Natural killer cell (primary cell): ENCODE measurements at regions of chr1 and their contacts with region 1.

Region 1: GRCh38 chr1:89271341-89272015 is 1.2 kb downstream of the GBP5 start:
- DNase-seq: no peak
- ATAC-seq: peak in 2 of 3 donors; percentile 36 to 41
- H3K4me3 ChIP-seq: peak overlapping the region; percentile 56
- H3K4me3 Mint-ChIP-seq: peak overlapping the region; percentile 96
- H3K27ac ChIP-seq: peak overlapping the region; percentile 59
- H3K27ac Mint-ChIP-seq: peak overlapping the region; percentile 98
- H3K4me1 ChIP-seq: peaks cover 24% of the 10 kb centered on the region
- H3K4me1 Mint-ChIP-seq: peaks cover 76 to 79% of the 10 kb centered on the region in 2 donors
- H3K27me3 ChIP-seq: no peaks in the 10 kb centered on the region
- H3K27me3 Mint-ChIP-seq: no peaks in the 10 kb centered on the region
- CTCF ChIP-seq: no peak

Region 2: DNA sequence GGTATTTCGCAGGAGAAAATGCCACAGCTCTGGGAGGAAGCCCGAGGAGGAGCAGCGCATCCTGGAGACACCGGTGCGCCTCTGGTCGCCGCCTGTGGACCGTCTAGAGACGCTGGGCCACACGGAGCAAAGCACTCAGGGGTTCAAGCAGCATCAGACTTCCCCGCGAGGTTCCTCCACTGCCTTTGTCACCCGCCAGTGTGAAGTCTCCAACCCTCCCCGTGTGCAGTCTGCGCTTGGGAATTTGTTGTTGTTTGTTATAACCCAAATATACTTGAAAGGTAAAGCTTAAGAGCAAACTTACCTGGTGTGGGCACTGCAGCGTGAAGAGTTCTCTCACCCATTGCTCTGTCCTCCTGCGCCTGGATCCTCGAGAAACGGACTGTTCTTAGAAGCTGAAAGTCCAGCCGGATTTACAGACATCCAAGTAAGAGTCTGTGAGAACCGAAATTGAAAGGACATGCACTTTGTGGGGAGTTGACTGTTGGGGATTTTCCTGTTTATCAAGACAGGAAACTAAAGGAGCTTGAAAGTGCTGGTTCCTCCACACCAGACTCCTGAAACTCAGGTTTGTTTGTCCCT is 72.9 kb before region 1 on chr1 and contains the start of gene GBP4:
- intact Hi-C with region 1: loop called (anchors 2 kb)
- DNase-seq: peak; percentile 40 to 80
- ATAC-seq: peak; percentile 70 to 80 (median 72)
- H3K4me3 ChIP-seq: peak within 1 kb of the TSS; percentile 81
- H3K4me3 Mint-ChIP-seq: peak within 1 kb of the TSS; percentile 89
- H3K27ac ChIP-seq: peak within 1 kb of the TSS; percentile 88
- H3K27ac Mint-ChIP-seq: peak within 1 kb of the TSS; percentile 91 to 99
- H3K4me1 ChIP-seq: peaks cover 23% of the 10 kb centered on the region
- H3K4me1 Mint-ChIP-seq: peaks cover 67 to 93% of the 10 kb centered on the region in 2 donors
- H3K27me3 ChIP-seq: no peaks in the 10 kb centered on the region
- H3K27me3 Mint-ChIP-seq: no peaks in the 10 kb centered on the region
- CTCF ChIP-seq: no peak
- total RNA-seq, gene GBP4: 39.1 to 62.1 (median 45.6) TPM

Region 3: DNA sequence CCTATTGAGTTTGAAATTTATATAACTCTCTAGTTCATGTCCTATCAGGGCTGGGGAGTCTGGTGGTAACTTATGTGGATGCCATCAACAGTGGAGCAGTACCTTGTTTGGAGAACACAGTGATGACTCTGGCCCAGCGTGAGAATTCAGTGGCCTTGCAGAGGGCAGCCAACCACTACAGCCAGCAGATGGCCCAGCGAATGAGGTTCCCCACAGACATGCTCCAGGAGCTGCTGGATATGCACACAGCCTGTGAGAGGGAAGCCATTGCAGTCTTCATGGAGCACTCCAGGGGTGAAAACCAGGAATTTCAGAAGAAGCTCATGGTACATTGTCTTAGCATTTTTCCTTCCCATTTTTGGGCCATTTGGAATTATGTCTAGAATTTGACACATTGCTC is 60.4 kb after region 1 on chr1:
- intact Hi-C with region 1: no loop called
- DNase-seq: no peak
- ATAC-seq: no peak
- H3K4me3 ChIP-seq: no peak overlapping the region
- H3K4me3 Mint-ChIP-seq: no peak overlapping the region
- H3K27ac ChIP-seq: no peak overlapping the region
- H3K27ac Mint-ChIP-seq: no peak overlapping the region
- H3K4me1 ChIP-seq: no peaks in the 10 kb centered on the region
- H3K4me1 Mint-ChIP-seq: peaks cover 0 to 4% of the 10 kb centered on the region in 2 donors
- H3K27me3 ChIP-seq: no peaks in the 10 kb centered on the region
- H3K27me3 Mint-ChIP-seq: no peaks in the 10 kb centered on the region
- CTCF ChIP-seq: no peak

Region 4: GRCh38 chr1:89454845-89455521 is 183.5 kb after region 1 on chr1:
- intact Hi-C with region 1: no loop called
- DNase-seq: peak; percentile 33 to 81
- ATAC-seq: peak; percentile 85 to 93 (median 92)
- H3K4me3 ChIP-seq: no peak overlapping the region
- H3K4me3 Mint-ChIP-seq: no peak overlapping the region
- H3K27ac ChIP-seq: no peak overlapping the region
- H3K27ac Mint-ChIP-seq: no peak overlapping the region
- H3K4me1 ChIP-seq: no peaks in the 10 kb centered on the region
- H3K4me1 Mint-ChIP-seq: peaks cover 0 to 4% of the 10 kb centered on the region in 2 donors
- H3K27me3 ChIP-seq: peaks cover 9% of the 10 kb centered on the region
- H3K27me3 Mint-ChIP-seq: peaks cover 30 to 44% of the 10 kb centered on the region in 2 donors
- CTCF ChIP-seq: peak; percentile 80